ENCODE measurements at regions of chr3 and their contacts with region 1.

Region 1: DNA sequence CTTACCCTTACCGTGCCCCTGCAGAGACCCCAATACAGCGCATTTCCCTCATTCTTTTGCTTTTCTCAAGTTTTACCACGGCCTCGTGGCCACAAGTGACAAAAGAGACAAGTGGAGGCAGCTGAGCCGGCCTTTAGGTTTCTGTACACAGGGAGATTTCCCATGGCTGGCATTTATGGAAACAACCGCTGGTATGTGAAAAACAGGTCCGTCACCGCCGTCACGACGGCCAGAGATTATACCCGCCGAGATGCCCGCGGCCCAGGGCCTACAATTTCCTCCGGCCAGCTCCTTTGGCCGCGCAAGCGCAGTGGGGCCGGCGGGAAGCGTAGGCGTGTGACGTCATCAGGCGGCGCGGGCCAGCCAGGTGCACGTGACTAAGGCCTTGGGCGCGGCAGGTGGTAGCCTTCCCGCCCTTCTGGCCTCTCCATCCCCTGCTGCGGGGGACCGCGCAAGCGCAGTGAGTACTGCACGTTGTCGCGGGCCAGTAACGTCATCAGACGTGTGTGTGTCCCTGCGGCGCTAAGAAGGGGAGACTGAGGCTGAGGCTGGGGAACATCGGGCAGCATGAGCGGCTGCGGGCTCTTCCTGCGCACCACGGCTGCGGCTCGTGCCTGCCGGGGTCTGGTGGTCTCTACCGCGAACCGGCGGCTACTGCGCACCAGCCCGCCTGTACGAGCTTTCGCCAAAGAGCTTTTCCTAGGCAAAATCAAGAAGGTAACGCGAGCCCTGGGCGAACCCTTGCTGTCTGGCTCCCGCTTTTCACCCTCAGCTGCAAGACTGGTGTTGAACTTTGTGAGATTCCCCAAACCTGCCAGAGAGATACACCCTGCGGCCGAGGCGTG is at the start of gene ACAD9:
- DNase-seq: peak; percentile 99
- ATAC-seq: peak; percentile 94
- H3K4me3 Mint-ChIP-seq: peak within 1 kb of the TSS; percentile 88
- H3K27ac Mint-ChIP-seq: peak within 1 kb of the TSS; percentile 92
- H3K4me1 Mint-ChIP-seq: peaks cover 52% of the 10 kb centered on the region
- H3K27me3 Mint-ChIP-seq: no peaks in the 10 kb centered on the region
- CTCF ChIP-seq: no peak
- total RNA-seq, gene ACAD9: 52.5 and 57.3 TPM in 2 replicates

Region 2: DNA sequence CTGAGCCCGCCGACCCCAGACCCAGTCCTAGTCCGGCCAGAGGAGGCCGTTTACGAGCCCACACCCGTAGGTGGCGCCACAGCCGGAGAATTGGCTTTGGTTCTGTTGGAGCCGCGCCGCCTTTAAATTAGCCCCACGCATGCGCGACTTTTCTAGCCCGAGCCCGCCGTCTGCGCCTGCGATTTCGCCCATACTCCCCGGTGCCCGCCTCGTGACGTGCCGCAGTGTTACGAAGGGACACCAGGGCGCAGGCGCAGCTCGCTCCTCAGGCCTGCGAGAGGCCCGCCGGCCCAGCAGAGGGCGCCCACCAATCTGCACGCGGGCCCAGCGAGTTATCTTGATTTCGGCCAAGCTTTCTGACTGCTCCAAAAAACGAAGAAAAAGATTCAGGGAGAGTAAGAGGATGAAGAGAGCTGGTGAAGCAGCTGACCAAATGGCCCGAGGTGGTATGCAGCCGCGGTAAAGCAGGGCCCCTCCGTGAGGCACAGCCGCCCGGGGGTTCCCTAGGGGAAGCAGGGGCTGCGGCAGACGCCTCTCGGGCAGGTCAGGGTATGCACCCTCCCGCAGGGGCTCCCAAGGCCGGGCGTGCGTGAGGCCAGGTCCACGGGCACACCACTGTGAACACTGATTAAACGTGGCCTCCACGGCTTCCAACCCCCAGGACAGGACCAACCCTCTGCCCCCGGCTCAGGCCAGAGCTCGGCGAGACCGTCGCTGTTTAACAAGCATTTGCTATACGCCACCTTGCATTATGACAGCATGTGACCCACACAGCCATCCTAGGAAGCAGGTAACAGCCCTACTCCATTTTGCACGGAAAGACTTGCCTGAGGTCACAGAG is 261.6 kb before region 1 on chr3:
- CTCF ChIA-PET with region 1: interaction called, 8 read pairs
- POLR2A ChIA-PET with region 1: interaction called, 10 read pairs
- intact Hi-C with region 1: loop called (anchors 1 kb)
- DNase-seq: peak; percentile 96
- ATAC-seq: peak; percentile 96
- H3K4me3 Mint-ChIP-seq: peak overlapping the region; percentile 91
- H3K27ac Mint-ChIP-seq: peak overlapping the region; percentile 88
- H3K4me1 Mint-ChIP-seq: peaks cover 23% of the 10 kb centered on the region
- H3K27me3 Mint-ChIP-seq: no peaks in the 10 kb centered on the region
- CTCF ChIP-seq: peak; percentile 94

Region 3: DNA sequence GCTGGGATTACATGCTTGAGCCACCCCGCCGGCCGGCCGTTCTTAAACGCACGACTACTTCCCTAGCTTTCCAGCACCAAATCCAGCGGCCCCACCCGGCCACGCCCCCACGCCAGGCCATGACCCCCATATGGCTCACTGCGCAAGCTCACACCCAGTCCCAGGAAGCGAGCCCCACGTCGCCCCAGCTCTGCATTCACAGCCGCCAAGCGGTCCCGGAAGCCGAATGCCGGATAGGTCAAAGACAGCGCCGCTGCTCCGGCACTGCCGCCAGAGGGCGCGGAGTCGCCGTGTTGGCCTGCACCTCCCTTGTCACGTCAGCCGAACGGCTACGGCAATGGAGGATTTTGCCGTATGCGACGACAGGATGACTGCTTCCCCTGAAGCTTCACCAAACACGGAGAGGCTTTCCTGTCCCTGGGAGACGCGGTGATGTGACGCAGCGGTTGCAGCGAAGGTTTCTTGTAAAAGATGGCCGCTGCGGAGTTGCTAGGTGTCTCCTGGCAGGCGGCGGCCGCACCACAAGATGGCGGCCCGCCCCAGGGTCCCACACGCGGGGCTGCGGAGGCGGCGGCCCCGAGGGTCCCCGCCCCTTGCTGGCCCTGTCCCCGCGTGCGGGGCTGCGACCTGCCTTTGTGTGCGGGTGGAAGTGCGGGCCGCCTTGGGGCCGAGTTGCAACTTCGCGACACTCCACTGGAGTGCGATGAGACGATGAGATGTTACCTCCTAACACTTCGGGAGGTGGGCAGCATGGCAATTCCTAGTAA is 198.6 kb before region 1 on chr3:
- CTCF ChIA-PET with region 1: interaction called, 15 read pairs
- POLR2A ChIA-PET with region 1: interaction called, 45 read pairs
- intact Hi-C with region 1: loop called (anchors 1 kb)
- DNase-seq: peak; percentile 93
- ATAC-seq: peak; percentile 96
- H3K4me3 Mint-ChIP-seq: peak overlapping the region; percentile 92
- H3K27ac Mint-ChIP-seq: peak overlapping the region; percentile 94
- H3K4me1 Mint-ChIP-seq: peaks cover 34% of the 10 kb centered on the region
- H3K27me3 Mint-ChIP-seq: no peaks in the 10 kb centered on the region
- CTCF ChIP-seq: peak; percentile 62

Region 4: GRCh38 chr3:128804017-128804810 is 75.1 kb before region 1 on chr3:
- CTCF ChIA-PET with region 1: no interaction called
- POLR2A ChIA-PET with region 1: interaction called, 7 read pairs
- intact Hi-C with region 1: loop called (anchors 1 kb)
- DNase-seq: no peak
- ATAC-seq: peak; percentile 94
- H3K4me3 Mint-ChIP-seq: peak overlapping the region; percentile 55
- H3K27ac Mint-ChIP-seq: peak overlapping the region; percentile 83
- H3K4me1 Mint-ChIP-seq: peaks cover 54% of the 10 kb centered on the region
- H3K27me3 Mint-ChIP-seq: no peaks in the 10 kb centered on the region
- CTCF ChIP-seq: no peak

Region 5: DNA sequence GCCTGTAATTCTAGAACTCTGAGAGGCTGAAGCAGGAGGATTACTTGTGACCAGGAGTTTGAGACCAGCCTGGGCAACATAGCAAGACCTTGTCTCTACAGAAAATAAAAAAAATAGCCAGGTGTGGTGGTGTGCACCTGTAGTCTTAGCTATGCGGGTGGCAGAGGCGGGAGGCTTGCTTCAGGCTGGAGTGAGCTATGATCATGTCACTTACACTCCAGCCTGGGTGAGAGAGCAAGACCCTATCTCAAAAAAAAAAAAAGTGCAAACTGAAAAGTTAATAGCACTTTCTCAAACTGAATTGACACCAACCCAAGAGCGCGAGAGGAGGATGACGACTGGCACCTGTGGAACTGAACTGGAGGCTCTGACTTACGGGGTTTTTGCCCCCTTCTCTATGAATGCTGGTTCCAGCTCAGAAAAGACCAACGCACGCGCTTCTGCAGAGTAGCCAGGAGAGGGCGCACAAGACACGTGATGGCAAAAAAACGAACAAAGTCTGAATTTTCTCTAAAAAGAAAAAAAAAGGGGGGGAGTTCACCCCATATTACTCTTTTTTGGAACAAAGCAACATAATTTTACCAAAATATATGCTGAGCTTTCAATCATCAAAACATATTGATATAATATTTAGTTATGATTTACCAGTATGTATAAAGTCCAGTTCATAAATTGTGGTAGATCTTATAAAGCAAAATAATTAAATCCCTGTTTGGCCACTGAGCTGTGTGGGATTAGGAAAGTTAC is 90.8 kb after region 1 on chr3:
- CTCF ChIA-PET with region 1: no interaction called
- POLR2A ChIA-PET with region 1: no interaction called
- intact Hi-C with region 1: no loop called
- DNase-seq: peak; percentile 28
- ATAC-seq: peak; percentile 50
- H3K4me3 Mint-ChIP-seq: no peak overlapping the region
- H3K27ac Mint-ChIP-seq: no peak overlapping the region
- H3K4me1 Mint-ChIP-seq: peaks cover 15% of the 10 kb centered on the region
- H3K27me3 Mint-ChIP-seq: no peaks in the 10 kb centered on the region
- CTCF ChIP-seq: peak; percentile 70

Region 6: DNA sequence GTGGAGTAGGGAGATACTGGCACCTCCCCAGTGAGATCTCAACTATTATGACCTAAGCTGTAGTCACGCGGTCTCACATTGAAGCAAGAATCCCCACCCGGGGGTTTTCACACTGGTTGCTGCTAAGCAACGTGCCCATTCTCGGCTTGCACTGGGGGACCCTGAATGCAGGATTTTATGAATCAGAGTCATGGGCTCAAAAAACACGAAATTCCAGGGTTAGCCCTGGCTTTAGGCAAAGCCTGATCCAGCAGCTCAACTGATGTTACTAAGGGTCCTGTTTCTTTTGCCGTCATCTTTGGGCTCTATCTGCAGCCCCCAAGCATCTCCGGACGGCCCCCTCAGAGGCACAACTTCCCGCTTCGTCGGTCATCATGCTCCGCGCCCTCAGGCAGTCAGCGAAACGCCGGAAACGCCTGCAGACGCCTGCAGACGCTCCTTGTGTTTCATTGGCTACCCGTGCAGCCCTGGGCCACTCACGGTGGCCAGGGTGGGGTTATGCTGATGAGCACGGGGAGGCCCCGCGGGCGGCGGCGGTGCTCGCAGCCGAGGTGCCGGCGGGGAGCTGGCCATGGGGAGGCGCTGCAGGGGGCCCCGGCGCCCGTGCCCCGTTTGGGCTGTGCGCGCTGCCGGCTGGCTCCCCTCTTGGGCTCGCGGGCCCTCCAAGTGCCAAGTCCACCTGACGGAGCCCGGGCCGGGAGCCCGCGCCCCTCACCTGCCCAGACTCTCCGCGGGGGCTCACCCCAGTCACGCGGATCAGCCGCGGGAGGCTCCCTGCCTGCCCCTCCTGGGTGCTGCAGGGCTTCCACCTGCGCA is 147.6 kb after region 1 on chr3:
- CTCF ChIA-PET with region 1: no interaction called
- POLR2A ChIA-PET with region 1: no interaction called
- intact Hi-C with region 1: loop called (anchors 2 kb)
- DNase-seq: peak; percentile 83
- ATAC-seq: peak; percentile 97
- H3K4me3 Mint-ChIP-seq: peak overlapping the region; percentile 85
- H3K27ac Mint-ChIP-seq: peak overlapping the region; percentile 94
- H3K4me1 Mint-ChIP-seq: peaks cover 12% of the 10 kb centered on the region
- H3K27me3 Mint-ChIP-seq: no peaks in the 10 kb centered on the region
- CTCF ChIP-seq: no peak

Region 7: GRCh38 chr3:129371041-129371826 is 491.9 kb after region 1 on chr3:
- CTCF ChIA-PET with region 1: no interaction called
- POLR2A ChIA-PET with region 1: no interaction called
- intact Hi-C with region 1: no loop called
- DNase-seq: no peak
- ATAC-seq: no peak
- H3K4me3 Mint-ChIP-seq: no peak overlapping the region
- H3K27ac Mint-ChIP-seq: no peak overlapping the region
- H3K4me1 Mint-ChIP-seq: no peaks in the 10 kb centered on the region
- H3K27me3 Mint-ChIP-seq: no peaks in the 10 kb centered on the region
- CTCF ChIP-seq: no peak

Region 8: GRCh38 chr3:129399145-129399894 is 520.0 kb after region 1 on chr3:
- CTCF ChIA-PET with region 1: no interaction called
- POLR2A ChIA-PET with region 1: no interaction called
- intact Hi-C with region 1: loop called (anchors 2 kb)
- DNase-seq: peak; percentile 50
- ATAC-seq: peak; percentile 80
- H3K4me3 Mint-ChIP-seq: peak overlapping the region; percentile 96
- H3K27ac Mint-ChIP-seq: peak overlapping the region; percentile 96
- H3K4me1 Mint-ChIP-seq: peaks cover 40% of the 10 kb centered on the region
- H3K27me3 Mint-ChIP-seq: no peaks in the 10 kb centered on the region
- CTCF ChIP-seq: peak; percentile 36